ENCODE measurements at regions of chr19 and their contacts with region 1.

Region 1: DNA sequence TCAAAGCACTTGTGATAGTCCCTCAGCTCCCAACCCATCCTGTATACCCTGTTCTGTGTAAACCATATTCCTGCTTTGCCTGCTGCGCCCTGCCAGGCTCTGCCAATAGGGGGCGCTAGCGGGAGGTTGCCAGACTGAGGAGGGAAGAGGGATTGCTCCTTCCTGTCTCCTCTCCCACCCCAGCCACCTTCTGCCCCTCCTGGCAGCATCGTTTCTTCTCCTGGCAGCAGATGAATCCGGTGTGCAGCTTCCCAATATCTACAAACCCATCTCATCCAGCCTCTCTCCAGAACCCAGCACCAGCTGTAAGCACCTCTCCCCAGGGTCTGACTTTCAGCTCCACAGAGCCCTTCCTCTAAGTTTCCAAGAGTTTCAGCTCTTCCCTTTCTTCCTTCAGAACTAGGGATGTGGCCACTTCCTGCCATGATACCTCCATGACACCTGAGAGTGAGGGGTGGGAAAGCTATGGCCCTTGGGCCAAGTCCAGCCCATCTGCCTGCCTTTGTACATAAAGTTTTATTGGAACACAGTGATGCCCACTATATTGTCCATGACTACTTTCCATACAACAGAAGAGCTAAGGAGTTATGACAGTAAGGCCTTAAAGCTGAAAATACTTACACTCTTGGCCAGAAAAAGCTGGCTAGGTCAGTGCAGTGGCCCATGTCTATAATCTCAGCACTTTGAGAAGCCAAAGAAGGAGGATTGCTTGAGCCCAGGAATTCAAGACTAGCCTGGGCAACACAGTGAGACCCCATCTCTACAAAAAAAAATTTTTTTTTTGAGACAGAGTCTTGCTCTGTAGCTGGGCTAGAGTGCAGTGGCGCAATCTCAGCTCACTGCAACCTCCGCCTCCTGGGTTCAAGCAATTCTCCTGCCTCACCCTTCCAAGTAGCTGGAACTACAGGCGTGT is 34.5 kb upstream of the ATP1A3 start:
- DNase-seq: no peak
- H3K4me3 ChIP-seq: no peak overlapping the region
- H3K27ac ChIP-seq: no peak overlapping the region
- H3K4me1 ChIP-seq: no peaks in the 10 kb centered on the region
- H3K27me3 ChIP-seq: peaks cover 0 to 4% of the 10 kb centered on the region in 2 experiments
- CTCF ChIP-seq: peak; percentile 47 to 57
- POLR2A ChIP-seq: no peak

Region 2: GRCh38 chr19:41978470-41978869 is 50.1 kb before region 1 on chr19:
- CTCF ChIA-PET with region 1: no interaction called
- POLR2A ChIA-PET with region 1: no interaction called
- dilution Hi-C with region 1: no loop called
- intact Hi-C with region 1: no loop called
- DNase-seq: no peak
- H3K4me3 ChIP-seq: no peak overlapping the region
- H3K27ac ChIP-seq: no peak overlapping the region
- H3K4me1 ChIP-seq: no peaks in the 10 kb centered on the region
- H3K27me3 ChIP-seq: no peaks in the 10 kb centered on the region
- CTCF ChIP-seq: no peak
- POLR2A ChIP-seq: no peak

Region 3: DNA sequence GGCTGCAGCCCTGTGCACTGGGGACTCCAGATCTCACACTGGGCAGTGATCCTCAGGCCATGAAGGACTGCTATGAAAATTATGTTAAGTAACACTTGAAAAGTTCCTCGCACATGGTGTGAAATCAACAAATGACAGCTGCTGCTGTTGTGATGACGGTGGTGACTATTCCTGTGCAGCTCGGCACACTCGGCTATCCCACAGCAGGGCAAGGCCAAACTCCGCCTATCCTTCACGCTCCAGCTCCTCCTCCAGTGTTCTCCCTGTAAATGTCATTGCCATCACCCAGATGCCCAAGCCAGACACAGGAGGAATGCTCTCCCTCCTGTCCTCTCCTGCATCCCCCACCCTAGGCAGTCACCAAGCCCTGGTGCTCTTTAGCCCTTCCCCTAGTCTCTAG is 10.1 kb after region 1 on chr19:
- CTCF ChIA-PET with region 1: interaction called, 25 read pairs
- POLR2A ChIA-PET with region 1: no interaction called
- dilution Hi-C with region 1: no loop called
- intact Hi-C with region 1: no loop called
- DNase-seq: no peak
- H3K4me3 ChIP-seq: no peak overlapping the region
- H3K27ac ChIP-seq: no peak overlapping the region
- H3K4me1 ChIP-seq: no peaks in the 10 kb centered on the region
- H3K27me3 ChIP-seq: no peaks in the 10 kb centered on the region
- CTCF ChIP-seq: no peak
- POLR2A ChIP-seq: no peak

Measured in endothelial cell of umbilical vein (primary cell).